ENCODE measurements at regions of chr3 and their contacts with region 1.

Region 1: DNA sequence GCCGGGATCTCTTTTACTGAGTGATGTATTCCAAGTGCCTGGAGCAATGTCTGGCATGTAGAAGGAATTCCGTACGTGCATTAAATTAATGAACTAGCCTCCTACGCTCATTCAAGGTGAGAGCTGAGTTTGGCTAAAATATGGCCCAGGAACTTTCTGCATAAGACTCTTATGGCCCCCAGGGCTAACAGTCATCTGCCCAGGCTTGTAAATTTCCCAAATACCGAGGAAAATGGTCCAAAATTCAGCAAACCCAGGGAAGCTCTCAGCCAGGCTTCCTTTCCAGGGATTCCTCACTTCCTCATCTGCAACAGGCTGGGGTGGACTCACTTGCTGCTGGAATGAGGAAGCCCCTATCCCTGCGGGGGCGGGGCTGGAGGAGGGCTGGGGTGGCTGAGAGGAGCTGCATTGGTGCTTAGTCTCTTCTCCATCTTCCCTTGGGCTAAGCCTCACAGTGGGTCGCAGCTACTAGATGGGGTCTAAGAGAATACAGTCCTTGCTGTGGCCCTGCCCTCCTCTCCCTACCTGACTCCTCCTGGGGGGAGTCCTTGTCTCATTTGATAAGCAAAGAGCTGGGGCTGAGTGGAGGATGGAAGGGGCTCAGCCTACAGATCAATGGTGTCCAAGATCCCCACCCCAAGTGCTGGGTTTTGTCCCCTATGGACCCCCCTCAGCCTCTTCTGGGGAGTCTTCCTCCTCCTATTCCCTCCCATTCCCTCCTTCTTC is 28.5 kb upstream of the APOD start:
- DNase-seq: no peak
- ATAC-seq: peak in 1 of 4 donors; percentile 36
- H3K4me3 ChIP-seq: no peak overlapping the region
- H3K27ac ChIP-seq: peak overlapping the region in 2 of 12 donors; percentile 7 to 29
- H3K4me1 ChIP-seq: peaks cover 0 to 17% (median 0%) of the 10 kb centered on the region in 12 donors
- H3K27me3 ChIP-seq: no peaks in the 10 kb centered on the region
- CTCF ChIP-seq: no peak
- POLR2A ChIP-seq: no peak

Region 2: DNA sequence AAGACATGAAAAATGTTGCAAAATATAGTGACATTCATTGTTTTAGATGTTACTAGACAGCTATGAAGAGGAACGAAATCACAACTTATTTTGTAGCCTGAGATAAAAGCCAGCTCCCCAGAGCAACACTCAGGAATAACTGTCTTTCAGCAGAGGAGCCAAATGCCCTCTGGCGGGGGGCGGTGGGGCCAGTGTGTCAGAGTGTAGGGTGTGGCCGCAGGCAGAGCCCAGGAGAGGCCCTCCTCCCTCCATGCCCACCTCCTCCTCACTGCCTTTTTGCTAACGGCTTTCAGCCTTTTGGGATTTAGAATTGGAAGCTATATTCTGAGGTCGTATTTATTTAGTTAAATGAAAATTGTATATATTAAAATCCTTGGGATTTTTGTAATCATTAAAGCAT is 45.4 kb before region 1 on chr3:
- intact Hi-C with region 1: no loop called
- DNase-seq: no peak
- ATAC-seq: no peak
- H3K4me3 ChIP-seq: no peak overlapping the region
- H3K27ac ChIP-seq: no peak overlapping the region
- H3K4me1 ChIP-seq: peaks cover 0 to 17% (median 6%) of the 10 kb centered on the region in 12 donors
- H3K27me3 ChIP-seq: peaks cover 0 to 5% (median 0%) of the 10 kb centered on the region in 9 donors
- CTCF ChIP-seq: no peak
- POLR2A ChIP-seq: no peak

Region 3: GRCh38 chr3:195716865-195717210 is 104.6 kb after region 1 on chr3:
- intact Hi-C with region 1: loop called in 7 of 10 experiments (anchors 2 to 10 kb)
- DNase-seq: peak in 1 of 5 donors; percentile 56
- ATAC-seq: peak in 2 of 4 donors; percentile 14 to 26
- H3K4me3 ChIP-seq: no peak overlapping the region
- H3K27ac ChIP-seq: no peak overlapping the region
- H3K4me1 ChIP-seq: no peaks in the 10 kb centered on the region
- H3K27me3 ChIP-seq: no peaks in the 10 kb centered on the region
- CTCF ChIP-seq: no peak
- POLR2A ChIP-seq: no peak

Region 4: DNA sequence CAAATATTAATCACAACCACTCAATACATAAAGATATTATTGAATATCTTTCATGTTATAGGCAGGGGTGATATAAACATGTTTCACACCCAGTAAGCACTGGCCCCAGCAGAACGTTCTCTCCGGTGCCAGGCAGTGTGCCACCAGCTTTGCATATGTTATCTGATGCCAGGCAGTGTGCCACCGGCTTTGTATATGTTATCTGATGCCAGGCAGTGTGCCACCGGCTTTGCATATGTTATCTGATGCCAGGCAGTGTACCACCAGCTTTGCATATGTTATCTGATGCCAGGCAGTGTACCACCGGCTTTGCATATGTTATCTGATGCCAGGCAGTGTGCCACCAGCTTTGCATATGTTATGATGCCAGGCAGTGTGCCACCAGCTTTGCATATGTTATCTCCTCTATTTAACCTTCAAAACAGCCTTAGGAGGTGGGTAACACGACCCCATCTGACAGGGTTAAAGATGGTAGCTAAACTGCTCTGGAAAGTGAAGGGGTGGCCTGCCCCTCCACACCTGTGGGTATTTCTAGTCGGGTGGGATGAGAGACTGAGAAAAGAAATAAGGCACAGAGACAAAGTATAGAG is 115.5 kb after region 1 on chr3:
- intact Hi-C with region 1: loop called in 5 of 10 experiments (anchors 5 to 10 kb)
- DNase-seq: no peak
- ATAC-seq: no peak
- H3K4me3 ChIP-seq: no peak overlapping the region
- H3K27ac ChIP-seq: no peak overlapping the region
- H3K4me1 ChIP-seq: no peaks in the 10 kb centered on the region
- H3K27me3 ChIP-seq: peaks cover 0 to 14% (median 0%) of the 10 kb centered on the region in 9 donors
- CTCF ChIP-seq: no peak
- POLR2A ChIP-seq: no peak

Region 5: DNA sequence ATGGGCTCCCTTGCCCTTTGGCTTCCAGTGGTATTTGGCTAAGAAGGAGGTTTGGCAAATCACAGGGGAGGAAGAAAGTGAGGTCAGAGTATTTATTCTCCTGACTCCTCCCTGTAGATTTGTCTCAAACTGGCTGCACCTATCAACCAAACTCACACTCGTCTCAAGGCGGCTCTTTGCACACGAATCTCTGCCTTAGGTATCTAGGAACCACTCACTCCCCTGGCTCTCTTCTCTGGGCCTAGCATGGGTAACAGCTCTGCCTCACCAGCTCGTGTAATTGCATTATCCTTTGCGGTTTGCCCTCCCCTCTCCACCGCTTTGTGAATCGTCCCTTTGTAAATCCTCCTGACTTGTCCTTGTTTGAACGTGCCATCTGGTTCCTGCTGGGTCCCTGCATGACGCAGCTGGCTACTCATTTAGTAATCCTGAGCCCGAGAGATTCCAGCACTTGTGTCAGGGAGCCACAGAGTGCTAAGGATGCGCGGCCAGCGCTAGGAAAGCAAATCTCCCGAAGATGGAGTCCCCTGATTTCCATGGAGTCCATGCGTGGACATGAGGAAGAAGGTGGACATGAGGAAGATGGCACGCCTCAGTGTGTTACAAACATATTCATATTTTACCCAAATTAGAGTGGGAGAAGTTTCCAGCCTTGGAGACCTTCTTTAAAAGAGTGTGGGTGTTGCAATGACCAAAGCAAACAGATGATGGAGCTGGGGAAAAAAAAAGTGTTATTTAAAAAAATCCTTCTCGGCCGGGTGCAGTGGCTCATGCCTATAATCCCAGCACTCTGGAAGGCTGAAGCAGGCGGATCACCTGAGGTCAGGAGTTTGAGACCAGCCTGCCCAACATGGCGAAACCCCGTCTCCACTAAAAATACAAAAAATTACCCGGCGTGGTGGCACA is 1054.0 kb after region 1 on chr3:
- intact Hi-C with region 1: no loop called
- DNase-seq: no peak
- ATAC-seq: peak in 1 of 4 donors; percentile 24
- H3K4me3 ChIP-seq: no peak overlapping the region
- H3K27ac ChIP-seq: no peak overlapping the region
- H3K4me1 ChIP-seq: peaks cover 0 to 28% (median 1%) of the 10 kb centered on the region in 12 donors
- H3K27me3 ChIP-seq: peaks cover 0 to 3% (median 0%) of the 10 kb centered on the region in 9 donors
- CTCF ChIP-seq: no peak
- POLR2A ChIP-seq: no peak